Sigmoid colon (tissue), 7 donors: ENCODE measurements at regions of chr1 and their contacts with region 1.

Region 1: GRCh38 chr1:195516036-195516435 is 1092.2 kb downstream of the KCNT2 start:
- DNase-seq: no peak
- H3K4me3 ChIP-seq: no peak overlapping the region
- H3K27ac ChIP-seq: no peak overlapping the region
- H3K4me1 ChIP-seq: no peaks in the 10 kb centered on the region
- H3K27me3 ChIP-seq: no peaks in the 10 kb centered on the region
- CTCF ChIP-seq: no peak
- EP300 ChIP-seq: no peak
- POLR2A ChIP-seq: no peak

Region 2: GRCh38 chr1:195529881-195530280 is 13.8 kb after region 1 on chr1:
- intact Hi-C with region 1: no loop called
- DNase-seq: no peak
- H3K4me3 ChIP-seq: no peak overlapping the region
- H3K27ac ChIP-seq: no peak overlapping the region
- H3K4me1 ChIP-seq: no peaks in the 10 kb centered on the region
- H3K27me3 ChIP-seq: no peaks in the 10 kb centered on the region
- CTCF ChIP-seq: no peak
- EP300 ChIP-seq: no peak
- POLR2A ChIP-seq: no peak

Region 3: GRCh38 chr1:195540389-195540788 is 24.4 kb after region 1 on chr1:
- intact Hi-C with region 1: loop called (anchors 2 kb)
- DNase-seq: no peak
- H3K4me3 ChIP-seq: no peak overlapping the region
- H3K27ac ChIP-seq: no peak overlapping the region
- H3K4me1 ChIP-seq: no peaks in the 10 kb centered on the region
- H3K27me3 ChIP-seq: no peaks in the 10 kb centered on the region
- CTCF ChIP-seq: no peak
- EP300 ChIP-seq: no peak
- POLR2A ChIP-seq: no peak